ENCODE measurements at regions of chr2 and their contacts with region 1.

Region 1: DNA sequence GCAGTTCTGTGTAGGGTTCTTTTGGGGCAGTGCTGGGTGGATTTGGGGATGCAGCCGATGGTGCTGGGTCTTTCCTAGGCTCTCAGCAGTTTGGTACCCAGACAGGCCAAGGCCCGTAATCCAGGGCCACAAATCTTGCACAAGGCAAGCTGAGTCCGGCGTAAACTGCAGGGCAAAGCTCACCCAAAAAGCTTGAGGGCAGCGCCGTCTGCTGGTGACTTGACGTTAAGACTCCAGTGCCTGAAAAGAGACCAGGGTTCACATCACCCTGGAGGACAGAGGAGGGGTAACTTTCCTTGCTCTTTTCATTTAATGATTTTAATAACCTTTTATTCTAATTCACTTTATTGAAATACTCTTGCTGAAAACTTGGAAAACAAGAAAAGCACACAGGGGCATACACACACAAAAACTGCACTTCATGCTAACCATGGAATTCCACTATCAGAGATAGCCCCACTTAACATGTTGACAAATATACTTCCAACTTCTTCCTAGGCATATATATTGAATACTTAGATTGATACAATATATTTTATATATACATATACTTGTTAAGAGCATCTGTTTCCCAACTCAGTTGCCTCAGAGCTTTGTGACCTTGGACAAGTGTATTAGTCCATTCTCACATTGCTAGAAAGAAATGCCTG is 38.9 kb downstream of the CNGA3 start:
- DNase-seq: peak; percentile 88
- ATAC-seq: peak; percentile 93
- H3K4me3 ChIP-seq: no peak overlapping the region
- H3K27ac ChIP-seq: no peak overlapping the region
- H3K4me1 ChIP-seq: no peaks in the 10 kb centered on the region
- H3K27me3 ChIP-seq: no peaks in the 10 kb centered on the region
- CTCF ChIP-seq: peak; percentile 97

Region 2: DNA sequence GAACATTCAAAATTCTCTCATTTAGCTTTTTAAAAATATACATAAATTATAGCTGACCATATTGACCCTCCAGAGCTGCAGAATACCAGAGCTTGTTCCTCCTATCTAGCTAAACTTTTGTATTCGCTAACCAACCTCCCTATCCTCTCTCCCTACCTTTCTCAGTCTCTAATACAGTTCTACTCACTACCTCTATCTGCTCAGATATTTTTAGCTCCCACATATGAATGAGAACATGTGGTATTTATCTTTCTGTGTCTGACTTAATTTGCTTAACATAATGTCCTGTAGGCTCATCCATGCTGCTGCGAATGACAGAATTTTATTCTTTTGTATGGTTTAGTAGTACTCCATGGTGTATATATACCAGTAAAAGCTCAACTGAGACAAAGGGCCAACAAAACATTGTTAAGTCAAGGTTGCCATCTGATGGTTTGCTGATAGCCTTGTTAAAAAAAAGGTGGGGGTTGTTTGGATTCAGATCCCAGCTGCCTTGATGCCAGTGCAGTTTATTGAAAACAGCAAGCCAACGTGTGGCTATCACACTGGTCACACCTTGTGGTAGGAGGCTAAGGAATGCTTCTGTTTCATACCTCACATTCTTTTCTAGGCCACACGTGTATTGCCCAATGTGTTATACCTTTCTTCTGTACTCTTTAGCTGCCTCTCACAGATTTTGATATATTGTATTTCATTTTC is 196.7 kb before region 1 on chr2:
- CTCF ChIA-PET with region 1: no interaction called
- POLR2A ChIA-PET with region 1: no interaction called
- intact Hi-C with region 1: loop called (anchors 10 kb)
- DNase-seq: peak; percentile 63
- ATAC-seq: no peak; the same call in 1 of the 2 replicates
- H3K4me3 ChIP-seq: no peak overlapping the region
- H3K27ac ChIP-seq: no peak overlapping the region
- H3K4me1 ChIP-seq: no peaks in the 10 kb centered on the region
- H3K27me3 ChIP-seq: peaks cover 6% of the 10 kb centered on the region; the same call in 1 of the 2 replicates
- CTCF ChIP-seq: peak; percentile 30; the same call in 1 of the 2 replicates

Measured in PC-3 (cell line).